ENCODE measurements at regions of chr2 and their contacts with region 1.

Region 1: DNA sequence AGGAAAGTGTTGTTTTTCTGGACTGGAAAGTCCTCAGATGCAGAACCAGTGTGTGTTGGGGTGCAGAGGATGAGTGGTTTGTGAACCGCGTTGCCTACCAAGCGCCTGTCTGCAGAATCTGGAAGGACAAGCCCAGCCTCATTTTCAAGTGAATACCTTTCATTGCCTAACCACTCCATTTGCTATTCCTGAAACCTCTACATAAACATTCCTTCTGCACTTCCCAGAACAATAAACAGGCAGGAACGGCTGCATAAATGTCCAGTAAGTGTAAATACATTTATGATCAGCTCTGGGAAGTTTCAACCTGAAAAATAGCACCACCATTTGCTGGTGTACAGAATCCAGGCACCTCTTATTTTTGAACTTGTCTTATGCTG is 45.4 kb upstream of the FHL2 start:
- DNase-seq: no peak
- ATAC-seq: no peak

Region 2: DNA sequence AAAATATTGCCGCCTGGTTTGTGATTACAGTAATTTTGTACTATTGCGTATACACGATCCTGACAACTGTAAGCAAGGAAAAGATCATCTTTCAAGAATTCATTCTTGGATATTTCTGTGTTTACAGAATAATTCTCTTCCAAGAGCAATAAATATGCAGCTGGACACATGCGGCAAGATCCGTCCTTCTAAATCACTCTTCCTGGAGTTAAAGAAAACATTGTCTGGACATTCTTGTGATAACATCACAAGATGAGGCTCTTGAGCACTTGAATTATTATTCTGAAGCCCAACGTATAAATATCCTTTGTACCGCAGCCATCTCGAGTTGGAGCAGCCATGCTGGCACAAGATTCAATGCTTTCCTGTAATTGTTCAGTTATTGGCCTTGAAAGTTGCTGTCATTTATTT is 55.2 kb before region 1 on chr2:
- intact Hi-C with region 1: no loop called
- DNase-seq: no peak
- ATAC-seq: peak; percentile 17 to 59

Region 3: GRCh38 chr2:105478670-105479069 is 34.5 kb after region 1 on chr2:
- intact Hi-C with region 1: loop called in 1 of 2 experiments (anchors 5 kb)
- DNase-seq: no peak
- ATAC-seq: no peak

Region 4: DNA sequence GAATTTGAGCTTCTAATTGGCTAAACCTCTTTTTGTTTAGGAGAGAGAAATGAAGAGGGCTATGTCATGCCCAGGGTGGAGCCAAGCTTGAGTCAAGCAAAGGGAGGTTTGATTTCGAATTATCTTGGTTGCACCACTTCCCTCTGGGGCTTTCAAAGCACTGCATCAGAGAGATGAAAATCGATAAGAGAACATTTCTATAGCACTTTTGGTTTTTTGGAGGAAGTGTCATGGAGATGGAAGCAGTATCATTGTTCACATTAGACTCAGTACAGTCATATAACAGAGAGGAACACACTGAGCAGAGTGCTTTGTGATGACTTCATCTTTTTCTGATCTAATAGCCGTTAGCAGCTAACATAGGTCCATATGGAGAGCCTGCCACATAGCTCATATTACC is 870.2 kb after region 1 on chr2:
- intact Hi-C with region 1: no loop called
- DNase-seq: no peak
- ATAC-seq: no peak

Measured in left cardiac atrium (tissue), 4 donors.